Left cardiac atrium (tissue), 4 donors: ENCODE measurements at regions of chr1 and their contacts with region 1.

Region 1: GRCh38 chr1:7902478-7903085 is 38.1 kb downstream of the TNFRSF9 start:
- DNase-seq: peak; percentile 51
- ATAC-seq: peak; percentile 81 to 95

Region 2: GRCh38 chr1:7808253-7808844 is 94.2 kb before region 1 on chr1:
- intact Hi-C with region 1: loop called in 1 of 2 experiments (anchors 5 kb)
- DNase-seq: no peak
- ATAC-seq: no peak

Region 3: DNA sequence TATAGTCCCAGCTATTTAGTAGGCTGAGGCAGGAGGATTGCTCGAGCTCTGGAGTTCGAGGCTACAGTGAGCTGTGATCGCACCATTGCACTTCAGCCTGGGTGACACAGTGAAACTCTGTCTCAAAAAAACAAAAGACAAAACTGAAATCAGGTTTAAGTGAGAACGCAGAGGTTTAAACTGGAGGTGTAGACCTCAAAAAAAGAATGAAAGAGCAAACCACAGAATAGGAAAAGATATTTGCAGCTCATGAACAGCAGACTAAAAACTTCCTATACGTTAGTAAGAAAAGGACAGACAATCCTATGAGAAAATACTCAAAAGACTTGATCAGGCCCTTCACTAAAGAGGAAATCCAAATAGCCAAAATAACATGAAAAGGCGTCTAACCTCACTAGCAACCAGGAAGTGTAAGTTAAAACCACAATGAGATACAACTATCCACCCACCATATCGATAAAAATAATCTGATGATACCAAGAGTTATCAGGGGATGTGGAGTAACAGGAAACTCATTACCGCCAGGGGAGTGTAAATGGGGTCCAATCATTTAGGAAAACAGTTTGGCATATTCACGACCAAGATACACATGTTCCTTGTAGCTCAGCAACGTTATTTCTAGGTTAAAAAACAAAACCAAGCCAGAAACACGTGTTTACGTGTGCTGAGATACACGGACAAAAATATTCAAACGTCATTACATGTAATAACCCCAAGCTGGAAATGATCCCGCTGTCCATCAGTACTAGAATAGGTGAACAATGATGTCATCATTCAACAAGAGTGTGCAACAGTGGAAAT is 28.3 kb after region 1 on chr1:
- intact Hi-C with region 1: no loop called
- DNase-seq: no peak
- ATAC-seq: no peak